Activated CD4-positive, alpha-beta T cell treated with anti-CD3 and anti-CD28 coated beads, Interleukin-2, amount 10 ng/mL, durations not matched to agents 24 days and 14 days (primary cell): ENCODE measurements at regions of chr9 and their contacts with region 1.

Region 1: DNA sequence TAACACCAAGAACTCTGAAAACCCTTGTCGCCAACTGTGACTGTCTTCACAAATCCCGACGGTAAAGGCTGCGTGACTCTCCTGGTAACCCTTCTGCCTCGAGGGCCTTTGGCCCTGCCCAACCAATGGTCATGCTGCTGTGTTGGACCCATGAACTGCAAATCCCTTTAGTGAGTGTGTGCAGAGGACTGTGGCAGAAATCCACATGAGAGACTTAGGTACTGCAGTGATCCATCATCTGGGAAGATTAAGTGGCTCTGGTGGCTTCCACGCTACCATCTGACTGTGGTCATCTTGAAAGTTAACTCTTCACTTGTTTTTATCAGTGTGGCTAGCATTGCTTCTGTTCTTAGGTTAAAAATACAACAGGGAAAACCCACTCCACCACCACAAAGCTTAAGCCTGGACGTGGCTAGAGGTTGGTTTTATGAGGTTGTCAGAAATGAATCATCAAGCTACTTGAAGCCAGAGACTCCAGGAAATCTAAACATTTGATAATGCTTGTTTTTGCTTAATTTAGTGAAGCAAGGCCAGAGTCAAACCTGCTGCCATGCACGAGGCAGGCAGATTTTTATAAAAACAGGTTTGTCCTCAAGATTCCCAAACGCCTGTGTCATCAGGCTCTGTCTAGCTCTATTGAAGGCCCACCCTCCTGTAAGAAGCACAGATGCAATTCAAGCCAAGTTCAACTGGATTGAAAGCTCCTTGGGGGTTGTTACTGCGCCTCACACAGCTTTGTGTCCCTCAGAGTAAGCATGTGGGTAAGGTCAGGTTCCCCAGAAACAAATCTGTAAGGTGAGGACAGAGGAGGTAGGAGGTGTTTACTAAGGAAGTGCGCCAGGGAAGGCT is 52.7 kb upstream of the ERCC6L2 start:
- DNase-seq: peak; percentile 83
- H3K4me3 Mint-ChIP-seq: peak overlapping the region; percentile 53
- H3K27ac Mint-ChIP-seq: peak overlapping the region; percentile 72
- H3K4me1 Mint-ChIP-seq: peaks cover 34% of the 10 kb centered on the region
- H3K27me3 Mint-ChIP-seq: peaks cover 39% of the 10 kb centered on the region

Region 2: GRCh38 chr9:95852059-95853032 is 29.5 kb after region 1 on chr9:
- intact Hi-C with region 1: loop called (anchors 1 kb)
- DNase-seq: peak; percentile 69
- H3K4me3 Mint-ChIP-seq: peak overlapping the region; percentile 56
- H3K27ac Mint-ChIP-seq: peak overlapping the region; percentile 69
- H3K4me1 Mint-ChIP-seq: peaks cover 21% of the 10 kb centered on the region
- H3K27me3 Mint-ChIP-seq: no peaks in the 10 kb centered on the region

Region 3: DNA sequence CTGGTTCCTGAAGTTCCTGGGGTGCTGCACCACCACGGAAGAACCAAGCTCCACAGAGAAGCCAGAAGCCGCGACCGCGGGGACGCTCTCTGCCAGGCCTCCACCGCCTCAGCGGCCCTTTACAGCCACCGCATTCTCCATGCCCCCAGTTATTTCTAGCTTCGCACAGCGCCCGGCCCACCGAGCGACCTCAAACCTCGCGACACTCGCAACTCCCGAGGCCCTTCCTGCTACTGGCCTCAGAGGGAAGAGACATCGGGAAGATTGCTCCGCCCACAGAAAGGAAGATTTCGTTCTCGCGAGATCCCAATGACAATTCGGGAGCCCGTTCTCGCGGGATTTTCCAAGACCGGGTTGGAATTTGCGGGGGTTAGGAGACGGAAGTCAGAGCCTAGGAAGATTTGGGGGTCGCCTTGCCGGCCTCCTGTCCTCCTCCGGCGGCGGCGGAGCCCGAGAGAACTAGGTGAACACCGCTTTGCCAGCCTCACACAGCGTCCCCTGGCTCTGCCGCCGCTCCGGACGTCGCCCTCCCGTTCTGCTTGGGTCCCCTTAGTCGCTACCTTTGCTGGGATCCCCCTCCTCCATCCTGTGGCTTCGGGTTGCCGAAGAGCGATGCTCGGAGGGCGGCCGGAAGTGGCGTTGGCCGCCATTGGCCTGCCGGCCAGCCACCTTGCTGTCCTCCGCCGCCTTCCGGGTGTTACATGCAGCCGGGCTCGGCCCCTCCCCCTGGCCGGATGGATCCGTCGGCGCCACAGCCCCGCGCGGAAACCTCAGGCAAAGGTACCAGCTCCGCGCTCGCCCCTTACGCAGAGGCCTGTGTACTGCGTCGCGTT is 52.7 kb after region 1 on chr9 and contains the start of gene ERCC6L2:
- intact Hi-C with region 1: loop called (anchors 2 kb)
- DNase-seq: peak; percentile 98
- H3K4me3 Mint-ChIP-seq: no peak within 1 kb of the TSS
- H3K27ac Mint-ChIP-seq: no peak within 1 kb of the TSS
- H3K4me1 Mint-ChIP-seq: peaks cover 37% of the 10 kb centered on the region
- H3K27me3 Mint-ChIP-seq: no peaks in the 10 kb centered on the region
- total RNA-seq, gene ERCC6L2: 32.1 and 35.7 TPM in 2 replicates

Region 4: GRCh38 chr9:96009690-96010472 is 187.1 kb after region 1 on chr9:
- intact Hi-C with region 1: loop called (anchors 2 kb)
- DNase-seq: peak; percentile 93
- H3K4me3 Mint-ChIP-seq: peak overlapping the region; percentile 52
- H3K27ac Mint-ChIP-seq: peak overlapping the region; percentile 96
- H3K4me1 Mint-ChIP-seq: peaks cover 51% of the 10 kb centered on the region
- H3K27me3 Mint-ChIP-seq: no peaks in the 10 kb centered on the region

Region 5: GRCh38 chr9:96150324-96151227 is 327.8 kb after region 1 on chr9:
- intact Hi-C with region 1: loop called (anchors 1 kb)
- DNase-seq: peak; percentile 83
- H3K4me3 Mint-ChIP-seq: peak overlapping the region; percentile 58
- H3K27ac Mint-ChIP-seq: peak overlapping the region; percentile 68
- H3K4me1 Mint-ChIP-seq: peaks cover 32% of the 10 kb centered on the region
- H3K27me3 Mint-ChIP-seq: peaks cover 21% of the 10 kb centered on the region

Region 6: GRCh38 chr9:96241391-96241809 is 418.6 kb after region 1 on chr9:
- intact Hi-C with region 1: loop called (anchors 2 kb)
- DNase-seq: peak; percentile 82
- H3K4me3 Mint-ChIP-seq: no peak overlapping the region
- H3K27ac Mint-ChIP-seq: peak overlapping the region; percentile 70
- H3K4me1 Mint-ChIP-seq: peaks cover 14% of the 10 kb centered on the region
- H3K27me3 Mint-ChIP-seq: peaks cover 61% of the 10 kb centered on the region